ENCODE measurements at regions of chr3 and their contacts with region 1.

Region 1: GRCh38 chr3:152205097-152205593 is 63.6 kb upstream of the MBNL1 start:
- DNase-seq: no peak
- ATAC-seq: no peak
- H3K4me3 Mint-ChIP-seq: peak overlapping the region; percentile 70
- H3K27ac Mint-ChIP-seq: peak overlapping the region; percentile 92
- H3K4me1 Mint-ChIP-seq: peaks cover 65% of the 10 kb centered on the region
- H3K27me3 Mint-ChIP-seq: no peaks in the 10 kb centered on the region

Region 2: DNA sequence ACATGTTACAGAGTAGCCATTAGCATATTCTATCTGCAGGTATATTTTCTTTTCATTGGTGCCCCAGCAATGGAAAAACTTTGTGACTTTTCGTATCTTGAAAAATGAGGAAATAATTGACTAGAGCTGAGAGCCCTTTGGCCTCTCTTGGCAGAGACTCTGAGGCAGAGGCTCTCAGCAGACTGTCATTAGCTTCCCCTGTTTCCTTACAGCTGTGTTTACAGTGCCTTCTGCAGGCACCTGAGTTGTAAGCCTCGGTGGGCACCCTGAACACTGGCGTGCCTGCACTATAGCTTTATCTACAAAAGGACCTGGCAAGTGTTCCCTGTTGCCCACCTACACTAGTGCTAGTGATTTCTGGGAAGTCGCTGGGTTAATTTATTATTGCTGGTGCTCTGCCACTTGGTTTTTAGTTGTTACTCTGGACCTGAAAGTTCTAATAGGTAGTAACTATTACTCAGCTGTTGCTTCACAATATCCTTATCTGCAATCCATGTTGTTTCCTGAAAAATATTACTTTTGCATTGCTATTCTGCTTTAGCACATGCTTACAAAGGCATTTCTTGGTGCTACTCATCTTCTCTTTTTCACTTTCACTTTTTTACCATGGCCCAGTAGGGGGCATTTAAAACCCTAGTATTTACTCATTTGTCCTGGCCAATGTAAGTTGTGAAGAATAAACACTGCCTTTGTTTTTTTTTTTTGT is 994.3 kb before region 1 on chr3:
- CTCF ChIA-PET with region 1: no interaction called
- POLR2A ChIA-PET with region 1: no interaction called
- intact Hi-C with region 1: loop called in 1 of 2 experiments (anchors 2 kb)
- DNase-seq: peak; percentile 20
- ATAC-seq: peak; percentile 38
- H3K4me3 Mint-ChIP-seq: peak overlapping the region; percentile 41
- H3K27ac Mint-ChIP-seq: peak overlapping the region; percentile 89
- H3K4me1 Mint-ChIP-seq: peaks cover 58% of the 10 kb centered on the region
- H3K27me3 Mint-ChIP-seq: no peaks in the 10 kb centered on the region

Region 3: DNA sequence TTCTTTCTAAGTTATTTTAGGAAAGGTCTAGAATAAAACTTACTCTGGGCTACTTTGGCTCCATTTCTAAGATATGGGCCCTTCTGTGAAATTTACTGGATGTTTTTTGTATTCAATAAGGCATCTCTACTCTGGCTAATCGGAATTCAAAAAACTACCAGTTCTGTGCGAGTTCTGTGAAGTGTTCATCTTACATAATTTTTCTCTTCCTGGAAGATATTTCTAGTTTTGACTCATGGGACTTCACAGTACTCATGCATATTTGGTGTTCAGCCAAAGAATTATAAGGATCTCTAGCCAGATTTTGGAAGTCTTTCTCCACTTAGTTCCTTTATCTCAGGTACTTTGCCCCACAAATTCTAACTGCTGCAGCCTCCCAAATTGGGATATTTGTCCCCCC is 17.2 kb after region 1 on chr3:
- CTCF ChIA-PET with region 1: interaction called, 5 read pairs
- POLR2A ChIA-PET with region 1: interaction called, 3 read pairs
- intact Hi-C with region 1: loop called in 1 of 2 experiments (anchors 2 kb)
- DNase-seq: no peak
- ATAC-seq: peak; percentile 68
- H3K4me3 Mint-ChIP-seq: peak overlapping the region; percentile 4
- H3K27ac Mint-ChIP-seq: peak overlapping the region; percentile 77
- H3K4me1 Mint-ChIP-seq: peaks cover 70% of the 10 kb centered on the region
- H3K27me3 Mint-ChIP-seq: no peaks in the 10 kb centered on the region

Region 4: DNA sequence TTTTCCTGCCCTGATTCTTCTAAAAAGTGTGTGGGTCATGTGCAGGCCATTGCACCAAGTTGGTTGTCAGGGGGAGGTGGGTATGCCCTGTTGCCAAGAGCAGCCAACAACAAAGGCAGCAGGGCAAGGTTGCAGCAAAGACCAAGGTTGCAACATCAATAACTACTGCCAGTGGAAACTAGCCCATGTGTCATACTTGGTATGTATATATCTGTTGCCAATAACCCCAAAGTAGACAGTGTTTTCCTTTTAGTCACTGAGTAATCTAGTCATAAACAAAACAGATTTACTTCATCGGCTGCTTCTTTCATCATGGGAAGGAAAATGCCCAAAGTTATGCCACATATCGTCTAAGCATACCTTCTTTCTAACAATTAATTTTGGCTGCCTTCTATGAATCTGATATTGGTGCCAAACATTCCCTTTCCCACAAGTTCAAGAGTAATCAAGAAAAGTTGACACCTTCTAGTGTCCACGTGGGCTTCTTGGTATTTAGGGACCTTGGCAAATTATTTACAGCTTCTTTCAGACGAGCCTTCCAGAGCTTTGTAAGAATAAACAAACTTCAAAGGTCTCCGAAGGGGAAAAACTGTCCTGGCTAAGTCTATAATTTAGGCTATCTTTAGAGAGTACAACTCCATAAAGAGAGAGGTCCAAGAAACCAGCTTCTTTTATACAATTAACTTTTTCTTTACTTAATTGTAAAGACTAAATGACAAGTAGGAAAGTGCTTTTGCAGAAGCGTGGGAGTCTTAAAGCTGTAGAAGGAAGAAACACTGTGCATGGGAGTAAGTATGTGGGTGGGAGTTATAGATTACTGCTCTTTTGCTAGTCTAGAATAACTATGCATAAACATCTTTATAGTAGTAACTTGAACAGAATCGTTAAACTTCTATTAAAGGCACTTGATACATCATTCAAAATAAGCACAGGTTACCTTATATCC is 53.6 kb after region 1 on chr3:
- CTCF ChIA-PET with region 1: interaction called, 4 read pairs
- POLR2A ChIA-PET with region 1: no interaction called
- intact Hi-C with region 1: loop called in 1 of 2 experiments (anchors 2 kb)
- DNase-seq: peak; percentile 82
- ATAC-seq: peak; percentile 81
- H3K4me3 Mint-ChIP-seq: peak overlapping the region; percentile 61
- H3K27ac Mint-ChIP-seq: peak overlapping the region; percentile 91
- H3K4me1 Mint-ChIP-seq: peaks cover 90% of the 10 kb centered on the region
- H3K27me3 Mint-ChIP-seq: no peaks in the 10 kb centered on the region